ENCODE measurements at regions of chr10 and their contacts with region 1.

Region 1: DNA sequence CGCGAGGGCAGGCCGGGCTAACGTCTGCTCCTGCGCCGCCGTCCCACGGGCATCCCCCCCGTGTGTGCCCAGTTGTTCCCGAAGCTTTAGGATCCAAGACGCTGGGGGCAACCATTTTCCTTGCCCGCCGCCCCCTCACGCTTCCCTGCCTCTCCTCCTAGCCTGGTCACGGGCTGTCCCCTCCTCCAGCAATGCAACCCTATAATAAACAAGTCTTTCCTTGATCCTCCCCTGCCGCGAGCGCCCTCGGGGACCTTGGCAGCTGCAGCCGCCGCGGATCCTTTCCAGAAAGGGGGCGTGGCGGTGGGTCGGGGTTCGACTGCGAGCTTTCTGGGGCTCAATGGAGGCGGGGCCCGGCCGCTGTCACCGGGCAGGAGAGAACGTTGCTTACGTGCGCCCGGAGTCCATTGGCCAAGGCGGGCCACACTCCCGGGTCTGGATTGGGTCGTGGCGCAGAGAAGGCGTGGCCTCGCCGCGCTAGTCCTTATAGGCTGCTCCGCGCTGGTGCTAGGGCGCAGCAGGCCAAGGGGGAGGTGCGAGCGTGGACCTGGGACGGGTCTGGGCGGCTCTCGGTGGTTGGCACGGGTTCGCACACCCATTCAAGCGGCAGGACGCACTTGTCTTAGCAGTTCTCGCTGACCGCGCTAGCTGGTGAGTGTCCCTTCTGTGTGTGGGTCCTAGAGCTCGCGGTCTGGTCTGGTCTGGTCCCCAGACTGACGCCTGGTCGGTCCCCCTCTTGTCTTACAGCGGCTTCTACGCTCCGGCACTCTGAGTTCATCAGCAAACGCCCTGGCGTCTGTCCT is at the start of gene DDIT4:
- DNase-seq: peak; percentile 99 to 100 (median 100)
- ATAC-seq: peak; percentile 72
- H3K4me3 ChIP-seq: peak within 1 kb of the TSS; percentile 86
- H3K27ac ChIP-seq: peak within 1 kb of the TSS; percentile 91
- H3K4me1 ChIP-seq: peaks cover 34 to 44% of the 10 kb centered on the region in 2 experiments
- H3K27me3 ChIP-seq: no peaks in the 10 kb centered on the region
- CTCF ChIP-seq: no peak; a peak in 1 of 6 replicates
- EP300 ChIP-seq: peak; percentile 34
- POLR2A ChIP-seq: peak; percentile 99
- RAD21 ChIP-seq: peak; percentile 15 to 46
- polyA plus RNA-seq, gene DDIT4: 8.2 to 12.3 TPM

Region 2: GRCh38 chr10:71696628-71697326 is 576.8 kb before region 1 on chr10:
- CTCF ChIA-PET with region 1: no interaction called
- POLR2A ChIA-PET with region 1: no interaction called
- in situ Hi-C with region 1: no loop called
- intact Hi-C with region 1: no loop called
- DNase-seq: peak; percentile 86 to 92 (median 90)
- ATAC-seq: peak; percentile 94
- H3K4me3 ChIP-seq: no peak overlapping the region
- H3K27ac ChIP-seq: no peak overlapping the region
- H3K4me1 ChIP-seq: peaks cover 13 to 51% of the 10 kb centered on the region in 2 experiments
- H3K27me3 ChIP-seq: no peaks in the 10 kb centered on the region
- CTCF ChIP-seq: peak; percentile 93 to 99 (median 95)
- EP300 ChIP-seq: no peak
- POLR2A ChIP-seq: no peak
- RAD21 ChIP-seq: peak; percentile 64 to 89

Region 3: GRCh38 chr10:72126184-72126871 is 147.3 kb before region 1 on chr10:
- CTCF ChIA-PET with region 1: no interaction called
- POLR2A ChIA-PET with region 1: interaction called, 22 read pairs
- in situ Hi-C with region 1: no loop called
- intact Hi-C with region 1: loop called (anchors 2 kb)
- DNase-seq: peak; percentile 27 to 59 (median 46)
- ATAC-seq: peak; percentile 79
- H3K4me3 ChIP-seq: no peak overlapping the region
- H3K27ac ChIP-seq: no peak overlapping the region
- H3K4me1 ChIP-seq: peaks cover 0 to 5% of the 10 kb centered on the region in 2 experiments; a peak in 1 of 5 replicates
- H3K27me3 ChIP-seq: no peaks in the 10 kb centered on the region
- CTCF ChIP-seq: peak; percentile 47 to 82 (median 58); a peak in 5 of 6 replicates
- EP300 ChIP-seq: no peak
- POLR2A ChIP-seq: no peak
- RAD21 ChIP-seq: peak; percentile 77 to 89

Region 4: GRCh38 chr10:72223743-72224101 is 49.9 kb before region 1 on chr10:
- CTCF ChIA-PET with region 1: interaction called, 3 read pairs
- POLR2A ChIA-PET with region 1: interaction called, 70 read pairs
- in situ Hi-C with region 1: no loop called
- intact Hi-C with region 1: no loop called
- DNase-seq: no peak
- ATAC-seq: no peak
- H3K4me3 ChIP-seq: no peak overlapping the region
- H3K27ac ChIP-seq: no peak overlapping the region
- H3K4me1 ChIP-seq: peaks cover 4 to 15% of the 10 kb centered on the region in 2 experiments; a peak in 3 of 5 replicates
- H3K27me3 ChIP-seq: no peaks in the 10 kb centered on the region
- CTCF ChIP-seq: no peak
- EP300 ChIP-seq: no peak
- POLR2A ChIP-seq: no peak
- RAD21 ChIP-seq: no peak

Region 5: DNA sequence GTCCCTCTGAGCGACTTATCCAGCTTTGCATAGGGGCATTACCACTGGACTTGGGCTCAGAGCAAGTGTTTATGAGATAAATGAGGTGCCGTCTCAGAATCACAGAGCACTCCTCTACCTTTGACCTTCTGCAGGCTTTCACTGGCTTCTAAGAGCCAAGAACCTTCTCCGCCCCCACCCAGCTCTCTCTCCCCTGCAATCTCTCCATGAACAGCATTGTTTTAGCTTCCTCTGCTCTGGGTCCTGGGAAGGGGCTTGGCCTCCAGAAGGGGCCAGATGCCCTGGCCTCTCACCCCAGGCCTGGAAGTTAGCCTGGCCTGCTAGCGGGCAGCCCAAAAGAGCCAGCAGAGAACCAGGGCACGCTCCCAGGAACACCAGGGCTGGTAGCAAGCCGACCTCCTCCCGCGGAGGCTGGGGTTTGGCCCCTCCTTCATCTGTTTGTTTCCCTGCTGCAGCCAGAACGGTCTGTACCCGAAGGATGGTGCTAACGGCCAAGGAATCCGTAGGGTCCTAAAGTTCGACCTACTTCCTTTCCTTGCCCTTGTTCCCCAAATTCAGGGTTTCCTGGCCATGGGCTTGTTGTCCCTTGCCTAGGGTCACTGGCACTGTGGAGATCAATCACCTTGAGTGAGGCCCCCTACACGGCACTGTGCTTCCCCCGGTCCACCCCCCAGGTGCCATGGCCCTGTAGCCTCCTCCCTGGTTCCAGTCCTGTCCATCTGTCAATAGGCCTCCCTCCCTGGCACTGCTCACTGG is 18.6 kb before region 1 on chr10:
- CTCF ChIA-PET with region 1: interaction called, 3 read pairs
- POLR2A ChIA-PET with region 1: interaction called, 277 read pairs
- in situ Hi-C with region 1: no loop called
- intact Hi-C with region 1: loop called (anchors 1 kb)
- DNase-seq: peak; percentile 69 to 82 (median 77)
- ATAC-seq: peak; percentile 92
- H3K4me3 ChIP-seq: peak overlapping the region; percentile 15
- H3K27ac ChIP-seq: peak overlapping the region; percentile 64
- H3K4me1 ChIP-seq: peaks cover 25 to 46% of the 10 kb centered on the region in 2 experiments
- H3K27me3 ChIP-seq: no peaks in the 10 kb centered on the region
- CTCF ChIP-seq: peak in 2 of 3 experiments; percentile 26 to 52; a peak in 3 of 6 replicates
- EP300 ChIP-seq: peak; percentile 48; the same call in 1 of the 2 replicates
- POLR2A ChIP-seq: no peak
- RAD21 ChIP-seq: peak; percentile 48 to 67

Region 6: DNA sequence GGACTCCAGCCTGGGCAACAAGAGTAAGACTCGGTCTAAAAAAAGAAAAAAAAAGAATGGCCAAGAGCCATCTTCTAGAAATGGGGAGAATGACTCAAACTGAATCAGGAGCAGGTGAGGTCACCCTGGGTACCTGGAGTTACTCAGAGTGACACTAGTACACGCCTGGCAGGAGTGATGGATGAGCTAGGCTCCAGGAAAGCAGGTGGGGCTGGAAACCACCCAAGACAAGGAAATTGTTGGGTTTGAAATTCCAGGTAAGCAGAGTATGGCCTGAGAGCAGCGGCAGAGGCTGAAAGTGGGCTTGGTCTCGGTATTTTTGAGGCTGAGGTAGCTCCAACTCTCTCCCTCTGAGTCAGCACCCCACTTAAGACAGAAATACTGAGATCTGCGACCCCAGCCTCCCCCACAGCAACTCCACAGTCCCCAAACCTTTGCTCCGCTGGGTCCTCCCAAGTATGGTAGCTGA is 18.6 kb after region 1 on chr10:
- CTCF ChIA-PET with region 1: no interaction called
- POLR2A ChIA-PET with region 1: interaction called, 155 read pairs
- in situ Hi-C with region 1: no loop called
- intact Hi-C with region 1: loop called (anchors 2 kb)
- DNase-seq: no peak
- ATAC-seq: no peak
- H3K4me3 ChIP-seq: no peak overlapping the region
- H3K27ac ChIP-seq: no peak overlapping the region
- H3K4me1 ChIP-seq: peaks cover 41 to 49% of the 10 kb centered on the region in 2 experiments
- H3K27me3 ChIP-seq: no peaks in the 10 kb centered on the region
- CTCF ChIP-seq: no peak
- EP300 ChIP-seq: no peak
- POLR2A ChIP-seq: no peak
- RAD21 ChIP-seq: no peak

Region 7: DNA sequence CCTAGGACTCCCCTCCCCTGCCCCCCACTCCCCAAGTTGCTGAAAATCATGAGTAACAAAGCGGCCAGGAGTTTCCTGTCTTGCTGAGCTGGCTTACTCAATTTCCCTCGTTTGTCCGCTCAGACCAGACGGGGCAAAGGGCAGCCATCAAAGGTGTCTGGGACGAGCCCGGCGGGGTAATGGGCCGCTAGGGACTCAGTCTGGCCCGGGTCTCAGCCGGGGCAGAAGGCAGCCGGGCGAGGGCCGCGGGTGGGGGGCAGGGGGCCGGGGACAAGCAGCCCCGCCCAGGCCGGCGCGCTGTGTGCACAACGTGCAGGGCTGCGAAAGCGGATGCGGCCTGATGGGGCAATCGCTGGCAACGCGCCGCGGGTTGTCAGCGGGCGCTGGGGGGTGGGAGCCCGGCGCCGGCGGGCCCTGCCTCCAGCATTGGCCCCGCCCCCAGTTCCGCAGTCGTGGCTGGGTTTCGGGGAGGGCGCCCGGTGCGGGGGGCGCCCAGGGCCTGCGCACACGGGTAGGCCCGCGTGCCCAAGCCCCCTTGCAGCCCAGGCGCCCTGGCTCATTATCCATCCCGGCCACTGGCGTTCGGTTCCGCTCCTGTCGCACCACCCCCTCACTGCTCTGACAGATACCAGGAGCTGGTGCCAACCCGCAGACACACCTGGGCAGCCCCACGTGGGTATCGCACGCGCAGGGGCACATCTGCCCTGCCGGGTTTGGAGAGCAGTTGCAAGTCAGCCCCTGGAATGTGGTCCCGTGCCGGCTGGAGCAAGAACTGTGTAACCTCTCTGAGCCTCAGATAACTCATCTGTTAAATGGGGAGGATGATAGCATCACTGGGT is 46.0 kb after region 1 on chr10:
- CTCF ChIA-PET with region 1: no interaction called
- POLR2A ChIA-PET with region 1: interaction called, 267 read pairs
- in situ Hi-C with region 1: loop called (anchors 5 kb)
- intact Hi-C with region 1: loop called (anchors 1 kb)
- DNase-seq: peak in 3 of 4 experiments; percentile 49 to 61 (median 58)
- ATAC-seq: no peak
- H3K4me3 ChIP-seq: no peak overlapping the region
- H3K27ac ChIP-seq: peak overlapping the region; percentile 97
- H3K4me1 ChIP-seq: peaks cover 66 to 69% of the 10 kb centered on the region in 2 experiments
- H3K27me3 ChIP-seq: no peaks in the 10 kb centered on the region
- CTCF ChIP-seq: no peak
- EP300 ChIP-seq: no peak; the same call in 1 of the 2 replicates
- POLR2A ChIP-seq: no peak
- RAD21 ChIP-seq: no peak

Region 8: GRCh38 chr10:72889391-72889831 is 615.8 kb after region 1 on chr10:
- CTCF ChIA-PET with region 1: no interaction called
- POLR2A ChIA-PET with region 1: no interaction called
- in situ Hi-C with region 1: loop called (anchors 10 kb)
- intact Hi-C with region 1: no loop called
- DNase-seq: no peak
- ATAC-seq: peak; percentile 34
- H3K4me3 ChIP-seq: no peak overlapping the region
- H3K27ac ChIP-seq: no peak overlapping the region
- H3K4me1 ChIP-seq: peaks cover 0 to 27% of the 10 kb centered on the region in 2 experiments; a peak in 3 of 5 replicates
- H3K27me3 ChIP-seq: no peaks in the 10 kb centered on the region
- CTCF ChIP-seq: no peak
- EP300 ChIP-seq: no peak
- POLR2A ChIP-seq: no peak; the same call in 1 of the 2 replicates
- RAD21 ChIP-seq: no peak

Measured in K562 (cell line).